ENCODE measurements at regions of chr1 and their contacts with region 1.

Region 1: GRCh38 chr1:3352299-3352951 is 102.0 kb upstream of the ARHGEF16 start:
- DNase-seq: no peak
- ATAC-seq: no peak

Region 2: DNA sequence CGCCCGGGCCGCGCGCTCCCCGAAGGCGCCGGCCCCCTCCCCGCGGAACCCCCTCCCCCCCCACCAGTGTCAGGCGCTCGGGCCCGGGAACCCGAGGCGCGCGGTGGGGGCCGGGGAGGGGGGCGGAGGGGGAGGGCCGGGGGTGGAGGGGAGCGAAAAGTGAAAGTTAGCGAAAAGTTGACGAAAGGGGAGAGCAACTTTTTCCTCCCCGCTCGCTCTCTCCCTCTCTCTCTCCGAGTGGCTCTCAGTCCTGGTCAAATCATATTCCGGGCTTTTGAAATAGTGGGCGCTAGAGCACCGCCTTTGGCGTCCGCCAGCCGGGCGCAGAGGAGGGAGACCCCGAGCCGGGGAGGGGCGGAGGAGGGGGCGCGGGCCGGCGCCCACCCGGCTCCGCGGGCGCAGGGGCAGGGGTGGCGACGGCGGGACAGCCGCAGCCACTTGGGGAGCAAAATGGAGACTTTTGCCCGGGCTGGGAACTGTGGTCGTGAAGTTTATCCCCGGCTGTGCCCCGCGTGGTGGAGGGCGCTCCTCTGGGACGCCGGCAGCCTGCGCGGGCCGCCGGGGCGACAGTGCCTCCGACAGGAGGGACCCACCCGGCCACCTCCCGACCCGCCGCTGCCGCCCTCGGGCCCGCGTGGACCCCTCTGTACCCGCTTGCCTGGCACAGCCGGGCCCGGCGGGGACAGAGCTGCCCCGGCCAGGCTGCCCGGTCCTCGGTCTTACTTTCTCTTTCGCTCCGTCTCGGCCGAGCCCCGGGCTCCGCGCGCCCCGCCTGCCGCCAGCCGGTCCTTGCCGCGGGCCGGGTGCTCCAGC is 282.7 kb before region 1 on chr1:
- intact Hi-C with region 1: loop called (anchors 1 kb)
- DNase-seq: peak; percentile 55
- ATAC-seq: peak; percentile 39

Region 3: GRCh38 chr1:3219005-3219790 is 133.2 kb before region 1 on chr1:
- intact Hi-C with region 1: no loop called
- DNase-seq: peak; percentile 88
- ATAC-seq: peak; percentile 86

Region 4: GRCh38 chr1:3292868-3293562 is 59.4 kb before region 1 on chr1:
- intact Hi-C with region 1: loop called (anchors 1 kb)
- DNase-seq: no peak
- ATAC-seq: no peak

Region 5: GRCh38 chr1:3312898-3313575 is 39.4 kb before region 1 on chr1:
- intact Hi-C with region 1: loop called (anchors 5 kb)
- DNase-seq: peak; percentile 93
- ATAC-seq: peak; percentile 93

Region 6: DNA sequence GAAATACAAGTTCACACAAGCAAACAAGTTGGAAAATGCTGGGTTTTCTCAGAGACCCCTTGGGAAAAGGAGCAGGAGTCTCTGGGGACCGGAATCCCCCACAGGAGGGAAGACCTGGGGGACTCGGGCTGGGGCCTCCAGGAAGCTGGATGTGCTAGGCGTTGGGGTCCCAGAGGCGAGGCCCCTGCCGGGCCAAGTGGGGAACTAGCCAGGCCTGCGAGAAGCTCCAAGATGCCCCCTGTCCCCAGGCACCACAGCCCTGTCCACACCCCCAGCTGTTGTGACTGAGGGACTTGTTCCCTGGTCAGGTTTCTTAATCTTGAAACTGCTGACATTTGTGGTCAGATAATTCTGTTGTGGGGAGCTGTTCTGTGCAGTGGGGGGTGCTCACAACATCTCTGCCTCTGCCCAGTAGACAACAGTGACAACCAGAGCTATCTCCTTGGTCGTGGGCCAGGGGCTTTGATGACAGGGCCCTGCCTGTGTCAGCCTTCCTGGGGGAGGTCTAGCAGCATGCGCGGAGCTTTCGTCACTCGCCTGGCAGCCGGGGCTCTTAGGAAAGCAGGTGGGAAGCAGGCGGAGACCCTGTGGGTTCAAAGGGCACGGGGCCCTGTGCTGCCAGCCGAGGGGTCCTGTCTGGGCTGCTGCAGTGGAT is 24.4 kb before region 1 on chr1:
- intact Hi-C with region 1: loop called (anchors 2 kb)
- DNase-seq: peak; percentile 80
- ATAC-seq: peak; percentile 80

Region 7: DNA sequence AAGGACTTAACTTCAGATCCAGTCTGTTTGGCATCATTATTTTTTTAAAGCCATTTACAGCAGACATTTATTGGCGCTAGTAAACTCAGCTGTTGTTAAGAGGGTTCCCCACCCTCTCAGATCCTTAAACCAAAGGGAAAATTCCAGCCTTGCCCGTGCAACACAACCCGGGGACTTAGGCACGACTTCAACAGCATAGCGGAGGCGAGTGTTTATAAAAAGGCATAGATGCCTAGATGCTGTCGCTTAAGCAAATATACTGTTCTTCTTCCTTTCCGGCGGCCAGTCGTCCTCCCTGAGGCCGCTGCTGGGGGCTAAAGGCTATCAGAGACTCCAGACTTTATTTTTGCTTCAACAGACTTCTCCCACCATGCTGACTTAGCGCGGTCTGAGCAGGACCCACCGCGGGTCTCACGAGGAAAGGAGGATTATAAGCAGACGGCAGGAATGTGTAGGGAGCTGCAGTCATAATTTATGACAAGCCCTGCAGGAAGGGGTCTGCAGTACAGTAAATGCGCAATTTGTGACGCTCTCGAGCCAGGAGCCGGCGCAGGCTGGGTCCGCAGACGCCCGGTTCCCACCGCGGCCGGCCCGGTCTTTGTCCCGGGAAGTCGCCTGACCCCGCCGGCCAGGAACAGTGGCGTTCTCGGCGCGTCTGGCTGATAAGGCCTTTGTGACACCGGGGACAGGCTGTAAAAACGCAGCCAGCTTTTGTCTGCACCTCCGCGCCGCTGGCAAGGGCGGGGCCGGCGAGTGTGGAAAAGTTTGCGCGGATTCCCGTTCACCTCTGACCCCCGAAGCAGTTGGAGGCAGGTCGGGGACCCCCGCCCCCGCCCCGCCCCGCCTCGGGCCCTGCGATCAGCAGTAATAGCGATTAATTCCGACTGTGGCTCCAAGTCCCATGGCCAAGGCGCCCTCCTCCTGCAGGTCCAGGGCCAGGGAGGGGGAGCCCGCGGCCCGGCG is 40.9 kb after region 1 on chr1:
- intact Hi-C with region 1: loop called (anchors 1 kb)
- DNase-seq: peak; percentile 85
- ATAC-seq: peak; percentile 79

Region 8: DNA sequence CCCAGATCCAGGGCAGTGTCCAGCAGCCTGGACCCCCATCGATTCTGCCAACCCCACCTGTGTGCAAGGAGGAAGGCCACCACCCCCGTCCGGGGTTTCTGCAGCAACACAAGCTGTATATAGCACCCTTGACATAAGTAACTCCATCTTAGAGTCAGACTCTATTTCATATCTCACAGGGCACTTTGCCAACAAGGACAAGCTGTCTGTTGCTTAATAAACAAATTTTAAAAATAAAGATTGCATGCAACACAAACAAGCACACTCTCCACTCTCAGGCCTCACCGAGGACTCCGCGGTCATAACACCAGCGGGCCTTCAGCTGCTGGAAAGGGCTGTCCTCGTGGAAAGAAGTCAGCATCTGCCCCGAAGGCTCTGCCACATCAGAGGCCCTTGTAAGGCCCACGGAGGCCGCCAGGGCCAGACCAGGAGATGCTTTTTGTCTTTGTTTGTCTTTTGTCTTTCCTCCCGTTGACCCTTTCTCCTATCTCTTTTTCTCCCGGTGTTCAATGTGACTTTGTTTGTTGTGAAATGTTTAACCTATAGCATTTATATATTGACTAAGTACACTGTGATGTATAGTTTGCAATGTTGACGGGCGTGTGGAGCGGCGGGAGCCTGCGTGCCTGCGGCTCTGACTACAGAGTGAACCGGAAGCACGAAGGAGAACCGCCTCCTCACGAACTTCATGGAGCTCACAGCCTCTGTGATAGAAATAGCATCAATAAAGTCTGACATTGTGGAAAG is 234.7 kb after region 1 on chr1:
- intact Hi-C with region 1: no loop called
- DNase-seq: no peak
- ATAC-seq: no peak

Measured in Right ventricle myocardium inferior (tissue), 1 donor.